HepG2 (cell line): ENCODE measurements at regions of chr6 and their contacts with region 1.

Region 1: DNA sequence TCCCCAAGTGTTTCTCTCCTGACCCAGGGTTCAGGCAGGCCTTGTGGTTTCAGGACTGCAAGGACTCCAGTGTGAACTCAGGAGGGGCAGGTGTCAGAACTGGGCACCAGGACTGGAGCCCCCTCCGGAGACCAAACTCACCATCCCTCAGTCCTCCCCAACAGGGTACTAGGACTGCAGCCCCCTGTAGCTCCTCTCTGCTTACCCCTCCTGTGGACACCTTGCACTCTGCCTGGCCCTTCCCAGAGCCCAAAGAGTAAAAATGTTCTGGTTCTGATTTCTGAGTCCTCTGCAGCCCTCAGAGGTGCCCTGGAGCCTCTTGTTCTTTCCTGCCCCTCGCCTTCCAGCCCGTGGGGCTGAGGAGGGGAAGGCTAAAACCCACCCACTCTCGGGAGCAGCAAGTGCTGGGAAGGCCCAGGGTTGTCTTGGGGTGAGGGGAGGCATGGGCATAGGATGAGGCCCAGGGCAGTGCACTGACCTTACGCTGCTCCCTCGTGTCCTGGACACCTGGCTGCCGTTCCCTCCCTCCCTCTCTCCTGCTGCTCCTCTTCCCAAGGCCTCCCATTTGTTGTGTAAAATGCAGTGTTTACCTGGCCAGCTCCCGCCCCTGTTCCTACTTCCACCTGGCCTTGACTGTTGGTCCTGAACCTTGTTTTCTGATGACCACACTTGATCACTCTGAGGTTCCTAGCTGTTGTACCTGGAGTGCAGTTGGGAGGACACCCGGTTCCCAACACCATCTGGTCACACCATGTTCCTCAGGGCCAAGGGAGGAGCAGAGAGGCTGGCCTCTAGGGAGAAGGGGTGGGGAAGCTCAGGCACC is 9.9 kb downstream of the CNPY3 start:
- DNase-seq: peak; percentile 86
- ATAC-seq: peak; percentile 87
- H3K4me3 ChIP-seq: peak overlapping the region in 1 of 3 experiments; percentile 20; a peak in 1 of 6 replicates
- H3K27ac ChIP-seq: peak overlapping the region; percentile 81
- H3K4me1 ChIP-seq: peaks cover 64% of the 10 kb centered on the region
- H3K27me3 ChIP-seq: no peaks in the 10 kb centered on the region
- CTCF ChIP-seq: peak; percentile 30; the same call in 1 of the 2 replicates
- EP300 ChIP-seq: peak; percentile 28 to 89; a peak in 3 of 4 replicates
- POLR2A ChIP-seq: no peak; a peak in 1 of 4 replicates
- RAD21 ChIP-seq: peak; percentile 44; the same call in 1 of the 2 replicates

Region 2: DNA sequence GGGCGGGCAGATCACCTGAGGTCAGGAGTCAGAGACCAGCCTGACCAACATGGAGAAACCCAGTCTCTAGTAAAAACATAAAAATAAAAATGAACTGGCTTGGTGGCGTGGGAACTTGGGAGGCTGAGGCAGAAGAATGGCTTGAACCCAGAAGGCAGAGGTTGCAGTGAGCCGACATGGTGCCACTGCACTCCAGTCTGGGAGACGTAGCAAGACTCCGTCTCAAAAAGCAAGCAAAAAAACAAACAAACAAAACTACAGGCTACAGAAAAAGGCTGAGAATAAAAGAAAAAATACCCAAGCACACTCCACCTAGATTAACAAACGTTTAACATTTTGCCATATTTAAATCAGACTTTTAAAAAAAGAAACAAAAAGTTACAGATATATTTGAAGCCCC is 17.4 kb before region 1 on chr6:
- CTCF ChIA-PET with region 1: no interaction called
- POLR2A ChIA-PET with region 1: no interaction called
- in situ Hi-C with region 1: no loop called
- intact Hi-C with region 1: no loop called
- DNase-seq: no peak
- ATAC-seq: no peak
- H3K4me3 ChIP-seq: no peak overlapping the region
- H3K27ac ChIP-seq: no peak overlapping the region
- H3K4me1 ChIP-seq: peaks cover 70% of the 10 kb centered on the region
- H3K27me3 ChIP-seq: no peaks in the 10 kb centered on the region
- CTCF ChIP-seq: no peak
- EP300 ChIP-seq: no peak
- POLR2A ChIP-seq: no peak
- RAD21 ChIP-seq: no peak

Region 3: DNA sequence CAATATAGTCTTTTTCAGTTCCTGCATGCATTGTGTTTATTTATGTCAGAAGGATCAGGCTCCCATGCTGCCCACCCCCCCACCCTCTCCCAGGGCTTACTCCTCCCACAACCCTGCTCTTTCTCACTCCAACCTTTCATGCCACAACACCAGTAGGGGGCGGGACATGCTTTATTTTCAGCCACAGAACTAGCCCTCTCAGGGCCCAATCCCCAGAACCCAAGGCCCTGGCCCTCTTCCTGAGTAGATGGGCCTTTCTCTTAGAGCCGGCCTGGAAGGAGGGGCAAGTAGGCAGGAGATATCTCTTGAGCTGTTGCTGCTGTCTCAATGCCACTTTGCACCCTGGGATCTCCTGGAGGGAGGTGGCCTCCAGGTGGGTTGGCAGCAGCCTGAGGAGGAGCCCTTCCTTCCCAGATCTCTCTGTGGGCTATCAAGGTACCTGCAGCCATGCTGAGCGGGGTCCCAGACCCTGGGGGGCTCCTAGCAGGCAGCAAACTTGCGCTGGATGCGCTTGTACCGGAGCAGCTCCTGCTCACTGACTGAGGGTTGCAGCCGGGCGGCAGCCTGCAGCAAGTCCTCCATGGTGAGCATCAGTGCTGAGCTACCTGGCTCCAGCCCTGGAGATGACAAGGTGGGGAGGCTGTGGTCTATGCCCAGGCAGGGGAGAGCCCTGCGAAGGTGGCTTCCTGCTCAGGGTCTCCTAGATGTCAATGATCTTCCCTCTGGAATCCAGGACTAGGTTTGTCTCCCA is 24.8 kb after region 1 on chr6:
- CTCF ChIA-PET with region 1: no interaction called
- POLR2A ChIA-PET with region 1: interaction called, 13 read pairs
- in situ Hi-C with region 1: no loop called
- intact Hi-C with region 1: no loop called
- DNase-seq: peak; percentile 76
- ATAC-seq: peak; percentile 44
- H3K4me3 ChIP-seq: no peak overlapping the region
- H3K27ac ChIP-seq: no peak overlapping the region
- H3K4me1 ChIP-seq: peaks cover 35% of the 10 kb centered on the region
- H3K27me3 ChIP-seq: no peaks in the 10 kb centered on the region; a peak in 1 of 5 replicates
- CTCF ChIP-seq: peak; percentile 72
- EP300 ChIP-seq: no peak
- POLR2A ChIP-seq: no peak
- RAD21 ChIP-seq: peak; percentile 62

Region 4: DNA sequence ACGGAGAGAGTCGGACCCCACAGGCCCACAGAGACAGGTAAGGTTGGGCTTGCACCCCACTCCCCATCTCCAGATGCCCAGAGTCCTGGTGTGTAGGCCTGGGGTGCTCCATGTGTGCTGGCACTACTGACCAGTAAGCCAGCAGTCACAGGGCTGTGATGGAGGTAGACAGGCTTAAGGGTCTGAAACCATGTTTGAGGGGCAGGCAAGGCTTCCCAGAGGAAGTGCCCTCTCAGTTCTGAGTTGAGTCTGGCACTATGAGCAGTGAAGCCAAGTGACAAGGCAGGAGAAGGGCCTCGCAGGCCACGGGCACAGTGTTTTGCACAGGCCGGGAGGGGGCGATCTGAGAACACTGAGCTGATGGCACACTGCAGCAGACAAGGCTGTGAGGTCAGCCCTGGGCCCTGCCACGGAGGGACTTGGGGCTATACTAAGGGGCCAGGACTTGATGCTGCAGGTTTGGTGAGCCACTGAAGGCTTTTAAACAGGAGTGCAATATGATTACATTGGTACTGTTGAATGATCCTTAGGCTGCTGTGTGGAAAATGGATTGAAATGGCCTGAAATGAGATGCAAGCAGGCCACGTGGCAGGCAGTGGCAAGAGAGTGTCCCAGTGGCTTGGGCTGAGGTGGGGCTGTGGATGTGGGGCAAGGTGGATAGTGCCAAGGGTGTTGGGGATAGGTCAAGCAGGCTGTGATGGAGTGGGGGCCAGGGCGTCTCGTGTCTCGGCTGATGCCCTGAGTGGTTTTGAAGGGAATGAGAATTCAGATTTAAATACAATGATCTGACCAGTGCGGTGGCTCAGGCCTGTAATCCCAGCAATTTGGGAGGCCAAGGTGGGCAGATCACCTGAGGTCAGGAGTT is 324.3 kb after region 1 on chr6:
- CTCF ChIA-PET with region 1: no interaction called
- POLR2A ChIA-PET with region 1: no interaction called
- in situ Hi-C with region 1: no loop called
- intact Hi-C with region 1: no loop called
- DNase-seq: peak; percentile 78
- ATAC-seq: peak; percentile 73
- H3K4me3 ChIP-seq: no peak overlapping the region; a peak in 1 of 6 replicates
- H3K27ac ChIP-seq: no peak overlapping the region
- H3K4me1 ChIP-seq: peaks cover 78% of the 10 kb centered on the region
- H3K27me3 ChIP-seq: peaks cover 0 to 4% of the 10 kb centered on the region in 2 experiments; a peak in 2 of 5 replicates
- CTCF ChIP-seq: peak; percentile 100
- EP300 ChIP-seq: 0 out of 4 replicates have a peak, but pooled peaks of 1 of the 2 experiments have one; percentile 12
- POLR2A ChIP-seq: no peak
- RAD21 ChIP-seq: peak; percentile 100